ENCODE measurements at regions of chr2 and their contacts with region 1.

Region 1: DNA sequence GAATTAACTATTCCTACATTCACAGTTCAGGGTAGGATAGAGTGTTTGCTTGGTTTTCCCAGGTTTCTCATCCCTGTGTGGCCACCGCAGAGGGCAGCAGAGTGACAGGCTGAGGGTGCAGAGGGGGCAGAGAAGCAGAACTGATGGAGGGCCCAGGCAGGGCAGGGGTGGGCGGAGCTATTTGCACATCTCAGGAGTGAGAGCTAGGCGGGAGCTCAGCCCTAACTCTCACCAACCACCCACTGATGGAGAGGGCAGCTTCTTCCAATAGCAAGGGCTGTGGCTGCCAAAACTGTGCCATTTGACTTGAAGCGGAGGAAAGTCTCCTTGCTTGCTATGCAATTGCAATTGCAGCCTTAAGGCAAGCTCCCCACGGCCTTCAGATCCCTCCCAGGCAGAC is 12.0 kb upstream of the DARS1 start:
- DNase-seq: peak; percentile 77
- H3K4me3 ChIP-seq: peak overlapping the region; percentile 30
- H3K27ac ChIP-seq: peak overlapping the region; percentile 58
- H3K4me1 ChIP-seq: peaks cover 55% of the 10 kb centered on the region
- CTCF ChIP-seq: peak; percentile 84

Region 2: DNA sequence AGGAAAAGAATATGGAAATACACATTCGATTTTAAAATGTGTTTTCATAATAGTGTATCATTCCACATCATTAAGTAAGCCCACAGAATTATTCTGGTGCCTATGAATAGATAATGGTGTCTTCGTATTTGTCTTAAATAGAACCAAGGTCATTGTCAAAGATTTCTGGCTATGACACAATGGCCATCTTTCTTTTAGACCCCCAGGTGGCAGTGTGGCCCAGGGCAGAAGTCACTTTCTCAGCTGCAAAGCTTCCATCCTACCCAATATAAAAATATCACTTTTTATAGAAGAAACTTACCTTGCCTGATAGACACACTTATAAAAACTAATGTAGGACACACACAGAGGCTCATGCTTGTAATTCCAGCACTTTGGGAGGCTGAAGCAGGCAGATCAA is 523.8 kb before region 1 on chr2:
- CTCF ChIA-PET with region 1: no interaction called
- POLR2A ChIA-PET with region 1: no interaction called
- intact Hi-C with region 1: no loop called
- DNase-seq: peak; percentile 55
- H3K4me3 ChIP-seq: no peak overlapping the region
- H3K27ac ChIP-seq: no peak overlapping the region
- H3K4me1 ChIP-seq: no peaks in the 10 kb centered on the region
- CTCF ChIP-seq: peak; percentile 87

Region 3: GRCh38 chr2:136008205-136008865 is 11.0 kb after region 1 on chr2:
- CTCF ChIA-PET with region 1: interaction called, 3 read pairs
- POLR2A ChIA-PET with region 1: interaction called, 18 read pairs
- intact Hi-C with region 1: no loop called
- DNase-seq: no peak
- H3K4me3 ChIP-seq: no peak overlapping the region
- H3K27ac ChIP-seq: no peak overlapping the region
- H3K4me1 ChIP-seq: peaks cover 32% of the 10 kb centered on the region
- CTCF ChIP-seq: no peak

Region 4: GRCh38 chr2:136075466-136075865 is 78.1 kb after region 1 on chr2:
- CTCF ChIA-PET with region 1: interaction called, 4 read pairs
- POLR2A ChIA-PET with region 1: interaction called, 3 read pairs
- intact Hi-C with region 1: loop called (anchors 5 kb)
- DNase-seq: peak; percentile 84
- H3K4me3 ChIP-seq: peak overlapping the region; percentile 25
- H3K27ac ChIP-seq: no peak overlapping the region
- H3K4me1 ChIP-seq: peaks cover 50% of the 10 kb centered on the region
- CTCF ChIP-seq: peak; percentile 54

Region 5: DNA sequence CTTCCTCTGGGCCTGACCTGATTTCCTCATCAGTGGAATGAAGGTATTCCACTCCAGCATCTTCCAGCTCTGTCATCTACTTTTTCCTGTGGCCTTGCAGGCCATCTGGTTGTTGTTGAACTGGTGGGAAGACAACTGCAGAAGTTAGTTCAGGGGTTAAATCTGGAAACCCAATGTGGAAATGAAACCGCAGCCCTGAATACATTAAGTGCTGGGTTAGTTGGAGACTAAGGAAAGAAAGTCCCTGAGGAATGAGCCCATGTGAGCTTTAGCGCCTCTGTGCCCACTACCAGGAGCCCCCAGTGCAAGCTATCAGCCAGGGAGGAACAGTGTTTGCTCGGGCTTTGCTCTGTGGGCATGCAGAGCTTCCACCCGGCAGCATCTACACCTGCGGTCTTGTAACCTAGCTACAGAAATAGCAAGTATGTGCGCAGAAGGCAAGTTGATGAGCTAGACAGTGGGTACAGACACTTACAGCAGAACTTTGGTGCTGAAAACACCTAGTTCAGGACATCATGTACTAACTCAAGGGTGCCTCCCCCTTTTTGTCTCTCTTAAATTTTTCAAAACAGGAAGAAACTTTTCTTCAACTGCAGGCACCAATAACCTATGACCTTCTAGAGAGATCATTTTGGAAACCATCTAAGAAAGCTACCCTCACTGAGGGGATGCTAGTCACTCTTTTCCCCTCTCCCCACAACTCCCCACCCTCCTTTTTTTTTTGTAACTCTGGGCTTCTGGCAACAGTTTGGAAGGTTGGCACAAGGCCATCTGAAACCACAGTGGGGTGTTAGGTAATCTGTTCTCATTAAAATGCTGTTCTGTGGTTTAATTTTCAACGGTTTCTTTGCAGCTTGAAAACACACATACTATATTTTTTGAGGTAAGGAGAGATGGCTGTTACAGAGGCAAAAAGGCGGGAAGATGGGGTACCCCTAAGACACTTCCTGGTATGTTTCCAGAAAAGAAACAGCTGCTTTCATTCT is 138.8 kb after region 1 on chr2:
- CTCF ChIA-PET with region 1: interaction called, 7 read pairs
- POLR2A ChIA-PET with region 1: interaction called, 19 read pairs
- intact Hi-C with region 1: loop called (anchors 1 kb)
- DNase-seq: peak; percentile 93
- H3K4me3 ChIP-seq: peak overlapping the region; percentile 31
- H3K27ac ChIP-seq: peak overlapping the region; percentile 98
- H3K4me1 ChIP-seq: peaks cover 98% of the 10 kb centered on the region
- CTCF ChIP-seq: no peak

Region 6: GRCh38 chr2:136378712-136379595 is 381.6 kb after region 1 on chr2:
- CTCF ChIA-PET with region 1: interaction called, 7 read pairs
- POLR2A ChIA-PET with region 1: interaction called, 13 read pairs
- intact Hi-C with region 1: loop called (anchors 1 kb)
- DNase-seq: peak; percentile 91
- H3K4me3 ChIP-seq: no peak overlapping the region
- H3K27ac ChIP-seq: peak overlapping the region; percentile 48
- H3K4me1 ChIP-seq: peaks cover 90% of the 10 kb centered on the region
- CTCF ChIP-seq: peak; percentile 99

Region 7: GRCh38 chr2:136486115-136486514 is 488.7 kb after region 1 on chr2:
- CTCF ChIA-PET with region 1: no interaction called
- POLR2A ChIA-PET with region 1: no interaction called
- intact Hi-C with region 1: no loop called
- DNase-seq: no peak
- H3K4me3 ChIP-seq: no peak overlapping the region
- H3K27ac ChIP-seq: no peak overlapping the region
- H3K4me1 ChIP-seq: no peaks in the 10 kb centered on the region
- CTCF ChIP-seq: no peak